Caco-2 (cell line): ENCODE measurements at regions of chr10 and their contacts with region 1.

Region 1: DNA sequence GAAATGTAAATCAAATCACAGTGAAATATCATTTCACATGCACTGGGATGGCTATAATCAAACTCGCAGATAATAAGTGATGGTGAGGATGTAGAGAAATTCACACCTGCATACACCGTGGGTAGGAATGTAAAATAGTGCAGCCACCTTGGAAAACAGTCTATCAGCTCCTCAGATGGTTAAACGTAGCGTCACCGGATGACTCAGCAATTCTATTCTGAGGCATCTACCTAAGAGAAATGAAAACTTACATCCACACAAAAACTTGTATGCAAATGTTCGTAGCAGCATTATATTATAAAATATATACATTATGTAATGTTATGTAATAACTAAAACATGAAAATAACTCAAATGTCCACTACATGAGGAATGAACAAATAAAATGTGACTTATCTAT is 38.9 kb downstream of the SH3PXD2A start:
- DNase-seq: no peak
- H3K4me3 ChIP-seq: no peak overlapping the region
- H3K4me3 Mint-ChIP-seq: no peak overlapping the region
- H3K27ac Mint-ChIP-seq: no peak overlapping the region
- H3K4me1 ChIP-seq: peaks cover 40% of the 10 kb centered on the region
- H3K4me1 Mint-ChIP-seq: peaks cover 48% of the 10 kb centered on the region
- H3K27me3 ChIP-seq: no peaks in the 10 kb centered on the region
- H3K27me3 Mint-ChIP-seq: no peaks in the 10 kb centered on the region
- CTCF ChIP-seq: no peak

Region 2: DNA sequence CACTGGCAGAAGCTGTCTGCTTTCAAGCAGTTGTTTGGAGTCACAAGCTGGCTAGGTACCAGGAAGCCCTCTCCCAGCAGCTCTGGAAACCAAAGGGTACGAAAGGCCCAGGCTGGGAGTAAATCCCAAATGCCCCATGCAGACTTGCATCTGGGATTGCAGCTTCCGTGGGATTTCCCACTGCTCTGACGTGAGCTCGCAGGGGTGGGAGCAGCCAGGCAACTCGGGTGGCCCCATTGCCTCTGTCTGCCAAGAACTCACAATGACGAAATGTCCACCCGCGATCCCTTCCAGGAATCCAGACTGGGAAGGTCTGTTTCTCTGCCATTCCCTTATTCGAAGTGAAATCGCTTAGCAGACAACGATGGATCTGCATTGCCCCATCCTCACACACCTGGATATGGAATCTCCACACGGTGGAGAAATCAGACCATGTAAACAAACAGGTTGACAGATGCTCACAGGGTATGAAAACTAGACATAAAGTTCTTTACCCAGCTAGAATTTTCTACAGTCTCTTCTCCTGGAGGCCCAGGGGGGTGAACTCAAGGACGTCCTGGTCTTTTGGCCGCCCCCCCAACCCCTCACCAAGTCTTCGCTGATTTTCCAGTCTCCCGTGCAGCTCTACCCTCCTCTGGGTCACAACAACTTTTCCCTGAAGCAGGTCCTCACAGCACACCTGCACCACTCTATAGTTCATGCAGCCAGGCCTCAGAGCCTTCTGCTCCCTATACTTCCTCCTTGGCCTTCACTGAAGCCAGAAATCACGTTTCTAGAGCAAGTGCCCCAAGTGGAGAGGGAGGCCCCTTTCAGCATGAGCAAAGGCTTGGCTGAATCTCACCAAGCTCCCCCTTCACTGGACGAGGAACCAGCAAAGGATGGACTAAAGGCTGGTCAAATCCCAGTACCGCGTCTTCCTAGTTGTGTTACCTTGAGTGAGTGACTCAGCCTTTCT is 18.9 kb after region 1 on chr10:
- CTCF ChIA-PET with region 1: interaction called, 5 read pairs
- POLR2A ChIA-PET with region 1: no interaction called
- intact Hi-C with region 1: loop called (anchors 1 kb)
- DNase-seq: no peak
- H3K4me3 ChIP-seq: no peak overlapping the region
- H3K4me3 Mint-ChIP-seq: no peak overlapping the region
- H3K27ac Mint-ChIP-seq: no peak overlapping the region
- H3K4me1 ChIP-seq: peaks cover 32% of the 10 kb centered on the region
- H3K4me1 Mint-ChIP-seq: peaks cover 26% of the 10 kb centered on the region
- H3K27me3 ChIP-seq: no peaks in the 10 kb centered on the region
- H3K27me3 Mint-ChIP-seq: no peaks in the 10 kb centered on the region
- CTCF ChIP-seq: no peak